Caco-2 (cell line): ENCODE measurements at regions of chr4 and their contacts with region 1.

Region 1: DNA sequence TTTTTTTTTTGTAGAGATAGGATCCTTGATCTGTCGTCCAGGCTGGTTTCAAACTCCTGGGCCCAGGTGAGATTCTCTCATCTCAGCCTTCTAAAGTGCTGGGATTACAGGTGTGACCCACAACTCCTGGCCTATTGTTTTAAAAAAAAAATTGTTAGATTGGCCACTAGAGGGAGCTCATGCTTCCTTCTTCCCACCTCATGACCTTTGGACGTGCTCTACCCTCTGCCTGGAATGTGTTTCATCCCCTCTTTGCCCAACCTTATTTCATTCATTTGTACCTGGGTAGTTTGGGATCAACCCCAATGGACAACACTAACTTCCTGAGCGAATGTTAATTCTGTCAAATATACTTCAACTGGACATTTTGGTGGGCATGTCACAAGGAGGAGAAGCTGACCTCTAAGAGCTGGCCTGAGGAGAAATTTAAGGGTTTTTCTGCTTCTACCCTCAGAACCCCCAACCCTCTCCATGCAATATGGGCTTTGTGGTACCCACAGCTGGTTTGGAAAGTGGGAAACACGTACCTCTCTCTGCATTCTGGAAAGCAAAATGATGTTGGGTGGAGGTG is 6.4 kb downstream of the PPEF2 start:
- DNase-seq: peak in 1 of 2 experiments; percentile 58
- H3K4me3 ChIP-seq: no peak overlapping the region
- H3K4me3 Mint-ChIP-seq: no peak overlapping the region
- H3K27ac Mint-ChIP-seq: no peak overlapping the region
- H3K4me1 ChIP-seq: peaks cover 4% of the 10 kb centered on the region; the same call in 1 of the 2 replicates
- H3K4me1 Mint-ChIP-seq: no peaks in the 10 kb centered on the region
- H3K27me3 ChIP-seq: no peaks in the 10 kb centered on the region
- H3K27me3 Mint-ChIP-seq: no peaks in the 10 kb centered on the region
- CTCF ChIP-seq: peak; percentile 52 to 72

Region 2: GRCh38 chr4:75235359-75235951 is 660.4 kb before region 1 on chr4:
- CTCF ChIA-PET with region 1: no interaction called
- POLR2A ChIA-PET with region 1: no interaction called
- intact Hi-C with region 1: no loop called
- DNase-seq: no peak
- H3K4me3 ChIP-seq: no peak overlapping the region
- H3K4me3 Mint-ChIP-seq: no peak overlapping the region
- H3K27ac Mint-ChIP-seq: no peak overlapping the region
- H3K4me1 ChIP-seq: peaks cover 31% of the 10 kb centered on the region
- H3K4me1 Mint-ChIP-seq: peaks cover 12% of the 10 kb centered on the region
- H3K27me3 ChIP-seq: no peaks in the 10 kb centered on the region
- H3K27me3 Mint-ChIP-seq: no peaks in the 10 kb centered on the region
- CTCF ChIP-seq: no peak

Region 3: DNA sequence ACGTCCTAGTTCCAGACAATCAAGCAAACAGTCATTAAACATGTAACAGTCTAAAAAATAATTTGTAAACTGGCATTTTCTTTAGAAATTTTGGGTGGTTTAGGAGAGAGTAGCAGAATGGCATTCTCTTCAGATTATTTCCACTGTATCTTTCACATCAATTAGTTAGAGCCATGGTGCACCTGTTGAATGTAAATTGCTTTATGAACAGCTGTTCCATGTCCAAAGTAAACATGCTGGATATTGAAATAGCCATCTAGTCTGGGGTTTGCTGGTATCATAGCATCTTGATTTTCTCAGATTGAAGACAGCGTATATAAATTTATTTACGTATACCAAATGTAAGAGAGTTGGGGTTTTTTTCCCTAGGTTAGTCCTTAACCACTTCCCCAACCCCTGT is 525.3 kb before region 1 on chr4:
- CTCF ChIA-PET with region 1: no interaction called
- POLR2A ChIA-PET with region 1: no interaction called
- intact Hi-C with region 1: no loop called
- DNase-seq: no peak
- H3K4me3 ChIP-seq: no peak overlapping the region
- H3K4me3 Mint-ChIP-seq: no peak overlapping the region
- H3K27ac Mint-ChIP-seq: no peak overlapping the region
- H3K4me1 ChIP-seq: no peaks in the 10 kb centered on the region
- H3K4me1 Mint-ChIP-seq: no peaks in the 10 kb centered on the region
- H3K27me3 ChIP-seq: no peaks in the 10 kb centered on the region
- H3K27me3 Mint-ChIP-seq: peaks cover 10% of the 10 kb centered on the region
- CTCF ChIP-seq: no peak

Region 4: GRCh38 chr4:75834095-75834771 is 61.6 kb before region 1 on chr4:
- CTCF ChIA-PET with region 1: no interaction called
- POLR2A ChIA-PET with region 1: no interaction called
- intact Hi-C with region 1: no loop called
- DNase-seq: no peak
- H3K4me3 ChIP-seq: no peak overlapping the region
- H3K4me3 Mint-ChIP-seq: no peak overlapping the region
- H3K27ac Mint-ChIP-seq: no peak overlapping the region
- H3K4me1 ChIP-seq: peaks cover 7% of the 10 kb centered on the region
- H3K4me1 Mint-ChIP-seq: no peaks in the 10 kb centered on the region
- H3K27me3 ChIP-seq: no peaks in the 10 kb centered on the region
- H3K27me3 Mint-ChIP-seq: no peaks in the 10 kb centered on the region
- CTCF ChIP-seq: no peak

Region 5: GRCh38 chr4:75940692-75941253 is 44.9 kb after region 1 on chr4 and contains the start of gene NAAA:
- CTCF ChIA-PET with region 1: interaction called, 4 read pairs
- POLR2A ChIA-PET with region 1: no interaction called
- intact Hi-C with region 1: loop called (anchors 5 kb)
- DNase-seq: peak; percentile 72 to 84
- H3K4me3 ChIP-seq: peak within 1 kb of the TSS; percentile 45
- H3K4me3 Mint-ChIP-seq: peak within 1 kb of the TSS; percentile 94
- H3K27ac Mint-ChIP-seq: peak within 1 kb of the TSS; percentile 77
- H3K4me1 ChIP-seq: 0 out of 2 replicates have a peak, but pooled peaks cover 3% of the 10 kb centered on the region
- H3K4me1 Mint-ChIP-seq: no peaks in the 10 kb centered on the region
- H3K27me3 ChIP-seq: no peaks in the 10 kb centered on the region
- H3K27me3 Mint-ChIP-seq: no peaks in the 10 kb centered on the region
- CTCF ChIP-seq: peak in 1 of 2 experiments; percentile 6
- total RNA-seq, gene NAAA: 11.2 and 11.8 TPM in 2 replicates

Region 6: GRCh38 chr4:75989846-75990528 is 94.2 kb after region 1 on chr4:
- CTCF ChIA-PET with region 1: no interaction called
- POLR2A ChIA-PET with region 1: no interaction called
- intact Hi-C with region 1: loop called (anchors 5 kb)
- DNase-seq: no peak
- H3K4me3 ChIP-seq: peak overlapping the region; percentile 76
- H3K4me3 Mint-ChIP-seq: peak overlapping the region; percentile 76
- H3K27ac Mint-ChIP-seq: peak overlapping the region; percentile 81
- H3K4me1 ChIP-seq: no peaks in the 10 kb centered on the region
- H3K4me1 Mint-ChIP-seq: peaks cover 18% of the 10 kb centered on the region
- H3K27me3 ChIP-seq: no peaks in the 10 kb centered on the region
- H3K27me3 Mint-ChIP-seq: no peaks in the 10 kb centered on the region
- CTCF ChIP-seq: no peak

Region 7: GRCh38 chr4:76067652-76068286 is 171.9 kb after region 1 on chr4:
- CTCF ChIA-PET with region 1: interaction called, 3 read pairs
- POLR2A ChIA-PET with region 1: no interaction called
- intact Hi-C with region 1: loop called (anchors 5 kb)
- DNase-seq: peak; percentile 64 to 76
- H3K4me3 ChIP-seq: no peak overlapping the region
- H3K4me3 Mint-ChIP-seq: no peak overlapping the region
- H3K27ac Mint-ChIP-seq: no peak overlapping the region
- H3K4me1 ChIP-seq: no peaks in the 10 kb centered on the region
- H3K4me1 Mint-ChIP-seq: no peaks in the 10 kb centered on the region
- H3K27me3 ChIP-seq: no peaks in the 10 kb centered on the region
- H3K27me3 Mint-ChIP-seq: no peaks in the 10 kb centered on the region
- CTCF ChIP-seq: peak; percentile 69 to 72

Region 8: GRCh38 chr4:76087007-76087769 is 191.4 kb after region 1 on chr4:
- CTCF ChIA-PET with region 1: interaction called, 9 read pairs
- POLR2A ChIA-PET with region 1: no interaction called
- intact Hi-C with region 1: loop called (anchors 5 kb)
- DNase-seq: peak; percentile 67 to 71
- H3K4me3 ChIP-seq: peak overlapping the region; percentile 8; the same call in 1 of the 2 replicates
- H3K4me3 Mint-ChIP-seq: peak overlapping the region; percentile 69
- H3K27ac Mint-ChIP-seq: no peak overlapping the region
- H3K4me1 ChIP-seq: no peaks in the 10 kb centered on the region
- H3K4me1 Mint-ChIP-seq: peaks cover 5% of the 10 kb centered on the region
- H3K27me3 ChIP-seq: no peaks in the 10 kb centered on the region
- H3K27me3 Mint-ChIP-seq: no peaks in the 10 kb centered on the region
- CTCF ChIP-seq: peak; percentile 40 to 76

Region 9: GRCh38 chr4:76459291-76459723 is 563.5 kb after region 1 on chr4:
- CTCF ChIA-PET with region 1: no interaction called
- POLR2A ChIA-PET with region 1: no interaction called
- intact Hi-C with region 1: no loop called
- DNase-seq: peak; percentile 21 to 46
- H3K4me3 ChIP-seq: no peak overlapping the region
- H3K4me3 Mint-ChIP-seq: no peak overlapping the region
- H3K27ac Mint-ChIP-seq: peak overlapping the region; percentile 85
- H3K4me1 ChIP-seq: peaks cover 18% of the 10 kb centered on the region
- H3K4me1 Mint-ChIP-seq: no peaks in the 10 kb centered on the region
- H3K27me3 ChIP-seq: no peaks in the 10 kb centered on the region
- H3K27me3 Mint-ChIP-seq: no peaks in the 10 kb centered on the region
- CTCF ChIP-seq: no peak